Panc1 (cell line): ENCODE measurements at regions of chr5 and their contacts with region 1.

Region 1: DNA sequence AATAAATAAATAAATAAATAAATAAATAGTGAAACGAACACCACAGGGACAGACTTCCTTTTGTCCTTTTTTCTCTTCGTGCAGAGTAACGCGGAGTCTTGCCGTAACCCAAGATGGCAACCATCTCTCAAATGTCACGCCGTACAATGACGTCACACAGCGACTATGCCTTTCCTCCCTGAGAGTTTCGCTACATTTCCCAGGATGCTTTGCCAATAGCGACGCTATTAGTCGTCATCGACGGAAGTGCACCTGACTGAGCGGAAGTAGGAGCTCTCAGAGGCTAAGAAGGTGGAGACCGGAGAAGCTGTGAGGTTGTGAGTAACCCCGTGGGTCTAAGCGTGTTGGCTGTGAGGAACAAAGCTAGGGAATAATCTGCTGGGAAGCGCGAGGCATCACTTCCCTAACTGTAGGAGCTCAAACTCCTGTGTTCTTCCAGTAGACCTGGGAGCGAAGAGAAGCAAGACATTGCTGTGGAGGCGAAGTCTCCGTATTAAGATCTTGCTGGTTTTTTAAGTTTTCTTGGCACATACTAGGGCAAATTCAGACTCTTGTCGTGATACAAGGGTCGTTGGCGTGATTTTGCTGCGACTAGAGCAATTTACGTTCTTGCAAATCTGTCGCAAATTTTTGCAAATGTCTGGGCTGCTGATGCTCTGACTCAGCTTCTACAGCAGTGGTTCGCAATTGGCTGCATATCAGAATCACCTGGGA is at the start of gene TTC1:
- DNase-seq: peak; percentile 98
- ATAC-seq: peak; percentile 100
- H3K4me3 ChIP-seq: peak within 1 kb of the TSS; percentile 94 to 98
- H3K27ac ChIP-seq: peak within 1 kb of the TSS; percentile 96
- H3K4me1 ChIP-seq: peaks cover 15% of the 10 kb centered on the region
- H3K27me3 ChIP-seq: no peaks in the 10 kb centered on the region
- CTCF ChIP-seq: no peak
- total RNA-seq, gene TTC1: 67.6 TPM

Region 2: DNA sequence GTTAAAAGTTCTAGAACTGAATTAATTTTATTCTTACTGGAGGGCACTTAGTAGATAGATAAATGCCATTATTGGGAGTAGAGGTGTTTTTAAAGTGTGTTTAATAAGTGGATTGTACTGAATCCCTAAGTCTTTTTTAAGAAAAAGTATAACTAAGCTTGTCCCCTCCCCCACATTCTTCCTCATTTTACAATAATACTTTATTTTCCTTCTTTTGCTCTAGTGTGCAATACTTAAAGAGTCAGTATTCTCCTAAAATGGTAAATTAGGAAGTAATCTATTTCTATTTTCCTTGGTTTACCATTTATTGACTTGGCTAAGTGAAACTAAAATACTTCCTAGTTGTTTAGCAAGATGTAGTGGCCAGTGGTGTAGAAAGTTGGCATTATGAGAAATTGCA is 734.4 kb before region 1 on chr5:
- CTCF ChIA-PET with region 1: interaction called, 10 read pairs
- POLR2A ChIA-PET with region 1: no interaction called
- in situ Hi-C with region 1: no loop called
- intact Hi-C with region 1: no loop called
- DNase-seq: no peak
- ATAC-seq: no peak
- H3K4me3 ChIP-seq: no peak overlapping the region
- H3K27ac ChIP-seq: no peak overlapping the region
- H3K4me1 ChIP-seq: no peaks in the 10 kb centered on the region
- H3K27me3 ChIP-seq: no peaks in the 10 kb centered on the region
- CTCF ChIP-seq: no peak

Region 3: DNA sequence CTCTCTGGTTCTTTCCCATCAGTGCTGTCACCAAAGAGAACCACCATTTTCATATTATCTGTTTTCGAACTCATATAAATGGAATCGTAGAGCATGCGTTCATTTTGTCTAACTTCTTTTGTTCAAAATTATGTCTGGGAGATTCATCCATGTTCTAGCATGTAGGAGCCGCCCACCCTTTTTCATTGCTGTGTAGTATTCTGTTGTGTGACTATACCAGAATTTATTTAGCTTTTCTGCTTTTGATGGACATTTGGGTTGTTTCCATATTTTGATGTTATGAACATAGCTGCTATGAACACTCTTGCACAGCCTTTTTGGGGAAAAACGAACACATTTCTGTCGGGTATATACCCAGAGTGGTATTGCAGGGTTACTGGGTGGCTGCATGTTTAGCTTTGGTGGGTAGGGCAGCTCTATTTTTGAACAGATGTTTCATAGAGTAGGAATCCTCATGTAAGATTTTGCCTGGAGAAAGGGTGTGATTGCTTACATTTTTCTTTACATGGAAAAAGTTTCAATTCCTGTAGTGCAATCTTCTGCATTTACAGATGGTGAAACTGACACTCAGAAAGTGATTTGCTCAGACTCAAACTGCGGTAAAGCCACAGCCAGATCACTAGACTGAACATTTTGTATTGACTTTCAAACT is 578.5 kb before region 1 on chr5:
- CTCF ChIA-PET with region 1: no interaction called
- POLR2A ChIA-PET with region 1: interaction called, 15 read pairs
- in situ Hi-C with region 1: no loop called
- intact Hi-C with region 1: no loop called
- DNase-seq: no peak
- ATAC-seq: no peak
- H3K4me3 ChIP-seq: no peak overlapping the region
- H3K27ac ChIP-seq: no peak overlapping the region
- H3K4me1 ChIP-seq: no peaks in the 10 kb centered on the region
- H3K27me3 ChIP-seq: peaks cover 2% of the 10 kb centered on the region; the same call in 1 of the 2 replicates
- CTCF ChIP-seq: no peak